Mammary epithelial cell (primary cell): ENCODE measurements at regions of chr3 and their contacts with region 1.

Region 1: GRCh38 chr3:196198771-196199753 is 12.1 kb downstream of the ZDHHC19 start:
- DNase-seq: no peak
- H3K4me3 ChIP-seq: no peak overlapping the region
- H3K27ac ChIP-seq: no peak overlapping the region
- H3K4me1 ChIP-seq: peaks cover 2% of the 10 kb centered on the region
- H3K27me3 ChIP-seq: no peaks in the 10 kb centered on the region
- CTCF ChIP-seq: peak; percentile 42

Region 2: GRCh38 chr3:196023947-196024346 is 175.1 kb before region 1 on chr3:
- CTCF ChIA-PET with region 1: no interaction called
- dilution Hi-C with region 1: no loop called
- in situ Hi-C with region 1: no loop called
- intact Hi-C with region 1: loop called (anchors 1 kb)
- DNase-seq: no peak
- H3K4me3 ChIP-seq: no peak overlapping the region
- H3K27ac ChIP-seq: no peak overlapping the region
- H3K4me1 ChIP-seq: no peaks in the 10 kb centered on the region
- H3K27me3 ChIP-seq: peaks cover 2% of the 10 kb centered on the region
- CTCF ChIP-seq: no peak

Region 3: DNA sequence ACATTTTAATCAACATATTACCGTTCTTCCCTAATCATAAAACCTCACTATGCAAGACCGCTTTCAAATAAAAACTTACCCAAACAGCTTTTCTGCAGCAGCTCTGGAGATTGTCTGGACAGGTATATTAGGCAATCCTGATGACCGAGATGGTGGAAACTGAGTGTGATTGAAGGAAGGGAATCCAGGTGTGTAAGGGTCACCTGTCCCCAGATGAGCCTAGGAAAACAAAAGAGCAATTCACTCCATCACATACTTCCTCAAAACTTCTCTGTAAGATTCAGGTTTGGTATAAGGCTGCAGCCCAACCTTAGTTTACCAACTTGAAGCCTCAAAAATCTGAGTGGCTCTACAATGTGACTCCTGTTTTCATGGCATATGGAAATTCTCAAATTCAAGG is 131.6 kb before region 1 on chr3:
- CTCF ChIA-PET with region 1: interaction called, 4 read pairs
- dilution Hi-C with region 1: no loop called
- in situ Hi-C with region 1: loop called (anchors 5 kb)
- intact Hi-C with region 1: no loop called
- DNase-seq: no peak
- H3K4me3 ChIP-seq: no peak overlapping the region
- H3K27ac ChIP-seq: no peak overlapping the region
- H3K4me1 ChIP-seq: no peaks in the 10 kb centered on the region
- H3K27me3 ChIP-seq: no peaks in the 10 kb centered on the region
- CTCF ChIP-seq: no peak

Region 4: DNA sequence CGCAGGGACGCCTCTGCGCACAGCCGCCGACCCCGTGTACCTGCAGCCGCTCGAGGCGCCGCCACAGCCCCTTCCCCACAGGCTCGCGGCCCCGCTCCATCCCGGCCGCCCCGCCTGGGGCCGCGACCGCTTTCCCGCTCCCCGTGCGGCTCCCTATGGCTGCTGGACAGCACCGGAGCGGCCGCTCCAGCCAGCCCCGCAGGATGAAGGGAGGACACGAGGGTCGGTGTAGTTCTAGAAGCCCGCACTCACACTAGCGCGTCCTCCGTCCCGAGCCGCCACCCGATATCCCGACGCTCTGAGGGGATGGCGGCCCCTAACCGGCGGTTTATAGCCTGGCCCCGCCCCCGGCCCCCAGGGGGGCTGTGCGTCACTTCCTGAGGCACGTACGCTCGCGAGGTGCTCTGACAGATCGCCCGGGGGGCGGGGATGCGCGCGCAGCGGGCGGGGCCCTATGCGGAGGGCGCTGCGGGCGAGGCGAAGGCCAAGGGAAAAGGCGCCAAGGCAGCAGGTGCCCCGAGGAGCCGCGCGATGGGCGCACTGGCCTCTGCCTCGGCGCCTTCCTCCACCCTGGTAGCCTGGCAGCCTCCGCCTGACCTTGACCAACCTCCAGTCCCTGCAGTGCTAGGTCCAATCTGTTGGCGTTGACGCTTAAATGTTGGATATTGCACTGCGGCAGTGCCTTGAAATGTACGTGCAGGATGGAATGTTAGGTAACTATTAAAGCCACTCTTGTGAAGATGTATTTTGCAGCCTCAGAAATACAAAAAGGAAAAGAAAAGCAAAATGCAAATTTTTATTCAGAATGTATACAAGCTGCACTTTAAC is 117.1 kb before region 1 on chr3 and contains the start of gene TFRC:
- CTCF ChIA-PET with region 1: no interaction called
- dilution Hi-C with region 1: no loop called
- in situ Hi-C with region 1: no loop called
- intact Hi-C with region 1: loop called (anchors 2 kb)
- DNase-seq: peak; percentile 90
- H3K4me3 ChIP-seq: peak within 1 kb of the TSS; percentile 68 to 97 (median 78)
- H3K27ac ChIP-seq: peak within 1 kb of the TSS; percentile 81
- H3K4me1 ChIP-seq: peaks cover 24% of the 10 kb centered on the region
- H3K27me3 ChIP-seq: no peaks in the 10 kb centered on the region
- CTCF ChIP-seq: no peak
- total RNA-seq, gene TFRC: 252 to 547 TPM

Region 5: DNA sequence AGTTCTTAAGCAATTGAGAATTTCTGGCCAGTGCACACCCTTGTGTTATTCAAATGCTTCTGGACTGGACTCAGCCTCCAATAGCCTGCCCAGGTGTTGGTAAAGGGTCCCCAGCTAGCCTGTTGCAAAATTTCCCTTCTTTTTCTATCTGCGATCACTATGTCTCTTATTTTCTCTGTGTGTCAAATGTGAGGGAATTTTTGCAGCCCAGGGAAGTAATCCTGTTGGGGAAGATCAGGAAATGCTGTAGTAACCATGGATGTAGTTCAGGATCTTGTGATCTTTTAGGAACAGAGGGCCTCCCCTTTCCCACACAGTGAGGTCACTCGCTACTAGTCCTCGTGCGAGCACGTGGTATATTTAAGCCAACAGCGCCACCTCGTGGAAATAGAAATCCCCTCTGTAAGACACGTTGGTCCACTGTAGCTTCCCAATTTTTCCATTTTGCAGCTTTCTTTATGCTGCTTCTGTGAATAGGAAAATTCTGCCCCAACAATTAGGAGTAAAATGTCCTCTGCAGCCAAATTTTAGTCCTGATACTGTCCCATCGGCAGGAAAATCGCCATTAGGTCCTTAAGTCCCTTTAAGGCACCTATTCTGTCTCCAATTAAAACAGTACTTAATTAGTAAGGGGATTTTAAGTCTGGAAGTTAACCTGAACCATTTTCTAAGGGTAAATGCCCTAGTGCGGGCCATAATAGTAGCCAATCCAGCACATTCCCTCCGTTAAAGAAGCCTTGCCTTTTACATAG is 320.1 kb after region 1 on chr3:
- CTCF ChIA-PET with region 1: no interaction called
- dilution Hi-C with region 1: no loop called
- in situ Hi-C with region 1: no loop called
- intact Hi-C with region 1: loop called (anchors 1 kb)
- DNase-seq: peak; percentile 63
- H3K4me3 ChIP-seq: no peak overlapping the region
- H3K27ac ChIP-seq: no peak overlapping the region
- H3K4me1 ChIP-seq: no peaks in the 10 kb centered on the region
- H3K27me3 ChIP-seq: no peaks in the 10 kb centered on the region
- CTCF ChIP-seq: peak; percentile 54 to 66